Heart right ventricle (tissue), 16 donors: ENCODE measurements at regions of chr16 and their contacts with region 1.

Region 1: GRCh38 chr16:53054670-53055485 is at the start of gene CHD9:
- DNase-seq: peak; percentile 82 to 88
- ATAC-seq: peak; percentile 92 to 97 (median 95)
- H3K4me3 ChIP-seq: peak within 1 kb of the TSS; percentile 48 to 90 (median 74)
- H3K27ac ChIP-seq: peak within 1 kb of the TSS; percentile 85 to 97 (median 94)
- H3K4me1 ChIP-seq: peaks cover 0 to 60% (median 40%) of the 10 kb centered on the region in 9 donors
- H3K27me3 ChIP-seq: no peaks in the 10 kb centered on the region
- CTCF ChIP-seq: peak; percentile 99 to 100 (median 100)
- total RNA-seq, gene CHD9: 39.6 to 58.4 (median 45.1) TPM

Region 2: GRCh38 chr16:52812678-52813556 is 242.0 kb before region 1 on chr16:
- intact Hi-C with region 1: no loop called
- DNase-seq: no peak
- ATAC-seq: peak in 4 of 8 donors; percentile 41 to 65 (median 55)
- H3K4me3 ChIP-seq: no peak overlapping the region
- H3K27ac ChIP-seq: no peak overlapping the region
- H3K4me1 ChIP-seq: peaks cover 0 to 9% (median 0%) of the 10 kb centered on the region in 9 donors
- H3K27me3 ChIP-seq: no peaks in the 10 kb centered on the region
- CTCF ChIP-seq: no peak

Region 3: DNA sequence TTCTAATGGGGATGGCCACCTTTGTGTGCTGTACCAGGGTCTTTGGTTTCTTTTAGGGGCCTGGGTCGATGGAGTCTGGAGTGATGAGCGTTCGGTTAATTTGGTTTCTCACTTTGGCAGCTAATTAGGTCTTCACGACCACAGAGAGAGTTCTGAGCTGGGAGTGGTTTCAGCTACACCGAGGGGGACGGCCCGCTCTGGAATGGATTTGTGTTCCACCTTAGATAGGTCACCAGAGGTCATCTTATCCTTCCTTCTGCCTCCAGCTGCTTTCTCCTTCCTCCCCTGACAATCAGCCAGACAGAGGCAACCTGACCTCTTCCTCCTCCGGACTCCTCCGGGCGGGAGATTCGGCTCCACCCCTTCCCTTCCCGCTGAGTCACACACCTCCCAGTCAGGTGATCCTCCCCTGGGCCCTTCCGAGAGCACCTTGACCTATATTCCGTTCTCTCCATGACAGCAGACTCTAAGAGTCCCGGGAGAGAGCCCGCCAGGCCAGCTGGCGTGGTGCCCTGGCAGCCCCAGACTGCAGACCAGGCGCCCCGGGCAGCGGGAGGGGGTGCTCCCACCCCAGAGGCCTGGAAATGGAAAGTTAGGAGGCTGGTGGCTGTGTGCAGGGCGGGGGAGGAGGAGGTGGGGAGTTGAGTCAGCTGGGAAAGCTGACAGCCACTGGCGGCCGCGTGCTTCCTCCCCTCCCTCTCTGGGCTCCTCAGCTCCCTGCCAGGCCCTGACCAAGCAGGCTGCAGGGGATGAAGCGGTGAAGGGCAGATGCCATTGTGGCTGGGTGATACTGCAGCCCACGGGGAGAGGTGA is 44.6 kb after region 1 on chr16:
- intact Hi-C with region 1: loop called in 8 of 10 experiments (anchors 2 to 5 kb)
- DNase-seq: peak; percentile 93 to 94
- ATAC-seq: peak; percentile 91 to 96 (median 92)
- H3K4me3 ChIP-seq: peak overlapping the region in 9 of 10 donors; percentile 14 to 58 (median 46)
- H3K27ac ChIP-seq: peak overlapping the region; percentile 86 to 99 (median 95)
- H3K4me1 ChIP-seq: peaks cover 16 to 82% (median 48%) of the 10 kb centered on the region in 9 donors
- H3K27me3 ChIP-seq: no peaks in the 10 kb centered on the region
- CTCF ChIP-seq: no peak

Region 4: GRCh38 chr16:53159781-53160436 is 105.0 kb after region 1 on chr16:
- intact Hi-C with region 1: loop called in 5 of 10 experiments (anchors 1 to 5 kb)
- DNase-seq: peak in 1 of 2 donors; percentile 32
- ATAC-seq: peak in 6 of 8 donors; percentile 44 to 89 (median 77)
- H3K4me3 ChIP-seq: no peak overlapping the region
- H3K27ac ChIP-seq: no peak overlapping the region
- H3K4me1 ChIP-seq: peaks cover 0 to 24% (median 0%) of the 10 kb centered on the region in 9 donors
- H3K27me3 ChIP-seq: no peaks in the 10 kb centered on the region
- CTCF ChIP-seq: peak; percentile 43 to 85 (median 74)

Region 5: DNA sequence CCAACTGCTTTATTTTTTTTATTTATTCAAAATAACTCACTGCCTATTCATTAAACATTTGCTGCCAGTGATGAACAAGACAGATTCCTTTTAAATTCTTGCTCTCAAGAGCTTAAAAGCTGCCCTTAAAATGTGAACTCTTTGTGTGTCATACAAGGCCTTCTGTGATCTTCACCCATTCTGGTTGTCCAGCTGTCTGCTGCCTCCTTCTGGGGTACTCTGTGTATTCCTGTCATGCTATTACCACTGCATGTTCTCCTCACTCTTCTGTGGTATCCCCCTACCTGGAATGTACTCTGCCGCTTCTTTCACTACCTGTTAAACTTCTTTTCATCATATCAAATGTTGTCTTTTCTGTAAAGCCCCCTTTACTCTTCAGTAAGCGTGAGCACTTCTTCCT is 165.7 kb after region 1 on chr16:
- intact Hi-C with region 1: loop called in 1 of 10 experiments (anchors 5 kb)
- DNase-seq: peak in 1 of 2 donors; percentile 10
- ATAC-seq: peak in 7 of 8 donors; percentile 54 to 79 (median 65)
- H3K4me3 ChIP-seq: peak overlapping the region in 1 of 10 donors; percentile 15
- H3K27ac ChIP-seq: peak overlapping the region in 9 of 10 donors; percentile 33 to 87 (median 70)
- H3K4me1 ChIP-seq: peaks cover 8 to 82% (median 66%) of the 10 kb centered on the region in 9 donors
- H3K27me3 ChIP-seq: no peaks in the 10 kb centered on the region
- CTCF ChIP-seq: peak in 8 of 9 donors; percentile 9 to 59 (median 35)